ENCODE measurements at regions of chr6 and their contacts with region 1.

Region 1: GRCh38 chr6:154928325-154928922 is 66.7 kb upstream of the TIAM2 start:
- DNase-seq: peak; percentile 71
- CTCF ChIP-seq: peak; percentile 76

Region 2: DNA sequence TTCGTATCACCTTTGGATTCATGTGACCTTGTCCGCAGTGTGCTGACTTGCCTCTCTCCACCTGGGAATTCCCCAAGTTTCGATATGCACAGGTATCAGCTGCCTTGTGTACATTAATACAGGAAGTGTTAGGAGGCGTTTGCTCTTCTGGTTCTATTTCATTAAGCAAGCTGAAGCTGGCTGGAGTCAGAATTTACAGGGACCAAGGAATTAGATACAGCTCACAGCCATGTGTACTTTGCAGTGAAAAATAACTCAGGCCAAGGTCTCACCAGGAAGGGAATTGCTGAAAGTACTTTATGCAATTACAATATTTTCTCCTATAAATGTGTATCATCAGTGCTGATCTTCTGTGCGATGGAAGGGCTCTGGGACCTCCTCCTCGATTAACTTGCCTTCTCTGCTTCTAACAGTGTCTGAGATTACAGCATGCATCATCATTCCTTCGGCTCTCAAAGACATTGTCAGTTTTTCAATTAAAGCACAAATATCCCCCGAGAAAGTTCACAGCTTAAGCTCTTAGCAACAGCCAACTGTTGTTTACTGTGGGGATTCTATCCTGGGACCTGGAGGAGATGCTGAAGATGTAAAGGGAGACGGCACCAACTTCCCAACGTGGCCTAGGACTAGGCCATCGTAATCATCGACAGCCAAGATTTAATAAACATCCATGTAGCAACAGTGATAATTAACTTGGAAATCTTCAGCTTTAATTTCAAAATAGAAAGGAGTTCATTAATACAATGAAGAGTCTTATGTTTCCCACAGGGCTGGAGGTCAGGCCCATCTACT is 52.9 kb after region 1 on chr6:
- in situ Hi-C with region 1: no loop called
- DNase-seq: peak; percentile 49
- CTCF ChIP-seq: no peak

Region 3: DNA sequence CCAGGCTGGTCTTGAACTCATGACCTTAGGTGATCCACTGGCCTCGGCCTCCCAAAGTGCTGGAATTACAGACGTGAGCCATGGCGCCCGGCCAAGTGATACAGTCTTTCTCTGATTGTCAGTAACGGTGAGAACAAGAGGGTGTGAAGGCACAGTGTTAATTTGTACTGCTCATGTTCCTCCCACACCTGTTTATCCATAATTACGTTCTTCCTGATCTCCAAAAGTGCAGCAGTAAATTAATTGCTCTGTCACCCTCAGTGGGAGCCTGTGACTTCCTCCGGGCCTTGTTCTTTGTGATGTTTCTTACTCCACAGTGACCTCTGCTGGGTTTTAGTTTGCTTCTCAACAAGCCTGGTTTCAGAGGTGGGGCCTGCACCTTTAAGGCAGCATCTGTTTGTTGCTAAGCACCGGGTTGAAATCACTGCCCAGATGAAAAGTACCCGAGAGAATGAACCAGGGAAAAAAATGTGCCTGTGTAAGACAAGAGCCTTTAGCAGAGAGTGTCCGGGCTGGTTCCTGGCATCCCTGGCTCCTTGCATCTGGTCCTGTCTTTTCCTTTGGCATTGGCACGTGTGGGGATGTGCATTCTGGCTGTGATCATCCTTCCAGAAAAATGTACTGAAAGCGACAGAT is 246.3 kb after region 1 on chr6:
- in situ Hi-C with region 1: loop called (anchors 5 kb)
- DNase-seq: peak; percentile 63
- CTCF ChIP-seq: peak; percentile 69

Measured in GM13977 (cell line).